ENCODE measurements at regions of chr4 and their contacts with region 1.

Region 1: DNA sequence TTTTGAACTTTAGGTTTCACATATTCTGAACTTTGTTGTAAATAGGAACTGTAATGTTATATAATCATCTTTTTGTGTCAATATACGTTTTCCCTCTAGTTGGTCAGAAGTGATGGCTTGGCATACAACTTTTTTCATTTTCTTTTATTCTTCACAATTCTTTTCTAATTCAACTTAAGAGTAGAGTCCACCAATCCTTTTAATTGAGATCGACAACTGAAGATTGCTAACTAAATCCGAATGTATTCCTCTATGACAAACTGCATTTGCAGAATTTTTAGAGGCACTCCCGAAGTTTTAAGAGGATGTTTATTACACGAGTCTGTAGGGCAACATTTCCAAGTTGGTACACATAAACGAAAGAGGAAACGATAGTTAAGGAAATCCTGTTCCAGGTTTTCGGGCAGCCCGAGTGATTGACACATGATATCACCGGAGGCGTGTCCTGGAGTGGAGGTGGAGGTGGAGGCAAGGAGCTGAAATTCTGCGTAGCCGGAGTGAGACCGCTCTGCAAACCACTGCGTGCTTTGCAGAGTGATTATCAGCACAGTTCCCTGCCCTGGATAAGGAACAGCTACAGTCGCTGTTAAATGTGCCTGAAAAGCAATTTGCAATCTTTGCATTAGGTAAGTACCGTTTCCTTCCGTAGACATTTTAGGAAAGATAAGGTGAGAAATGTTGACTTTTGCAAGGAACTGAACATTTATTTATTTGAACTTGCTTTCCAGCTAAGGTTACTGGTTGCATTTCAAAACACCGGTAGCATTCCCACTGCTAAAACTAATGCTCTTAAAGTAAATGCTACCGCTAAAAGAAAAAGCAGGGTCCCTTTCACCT is at the start of gene SPRY1:
- DNase-seq: peak; percentile 74
- ATAC-seq: peak; percentile 51
- H3K4me3 Mint-ChIP-seq: peak within 1 kb of the TSS; percentile 97
- H3K27ac Mint-ChIP-seq: peak within 1 kb of the TSS; percentile 94
- H3K4me1 Mint-ChIP-seq: peaks cover 16% of the 10 kb centered on the region
- H3K27me3 Mint-ChIP-seq: no peaks in the 10 kb centered on the region
- total RNA-seq, gene SPRY1: 46.3 to 51.3 TPM

Region 2: GRCh38 chr4:123380728-123381716 is 15.5 kb before region 1 on chr4:
- POLR2A ChIA-PET with region 1: no interaction called
- DNase-seq: no peak
- ATAC-seq: no peak
- H3K4me3 Mint-ChIP-seq: no peak overlapping the region
- H3K27ac Mint-ChIP-seq: no peak overlapping the region
- H3K4me1 Mint-ChIP-seq: peaks cover 3% of the 10 kb centered on the region
- H3K27me3 Mint-ChIP-seq: peaks cover 13% of the 10 kb centered on the region

Region 3: DNA sequence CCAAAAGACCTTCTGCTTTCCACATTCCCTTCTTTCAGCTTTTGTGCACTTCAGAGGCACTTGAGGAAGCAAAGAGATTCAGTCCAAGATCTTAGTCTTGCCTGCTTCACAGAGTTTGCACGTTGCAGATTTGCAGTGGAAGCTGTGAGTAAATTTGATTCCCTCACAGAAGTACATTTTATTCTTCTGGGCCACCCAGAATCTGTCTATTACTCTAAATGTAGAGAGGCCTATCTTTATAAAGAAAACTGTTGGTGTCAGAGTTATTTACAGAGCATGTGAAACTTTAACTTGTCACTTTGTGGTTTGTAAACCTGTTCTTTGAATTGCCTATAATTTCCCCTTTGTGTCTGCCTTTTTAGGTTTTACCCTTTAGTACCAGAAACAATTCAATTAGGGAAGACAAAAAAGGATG is 15.6 kb after region 1 on chr4:
- POLR2A ChIA-PET with region 1: interaction called, 76 read pairs
- DNase-seq: no peak
- ATAC-seq: peak; percentile 47
- H3K4me3 Mint-ChIP-seq: peak overlapping the region; percentile 79
- H3K27ac Mint-ChIP-seq: peak overlapping the region; percentile 90
- H3K4me1 Mint-ChIP-seq: peaks cover 45% of the 10 kb centered on the region
- H3K27me3 Mint-ChIP-seq: no peaks in the 10 kb centered on the region

Region 4: GRCh38 chr4:123418351-123418931 is 21.9 kb after region 1 on chr4:
- POLR2A ChIA-PET with region 1: interaction called, 76 read pairs
- DNase-seq: no peak
- ATAC-seq: peak; percentile 48
- H3K4me3 Mint-ChIP-seq: peak overlapping the region; percentile 73
- H3K27ac Mint-ChIP-seq: peak overlapping the region; percentile 95
- H3K4me1 Mint-ChIP-seq: peaks cover 74% of the 10 kb centered on the region
- H3K27me3 Mint-ChIP-seq: no peaks in the 10 kb centered on the region

Region 5: GRCh38 chr4:123444290-123444731 is 47.8 kb after region 1 on chr4:
- POLR2A ChIA-PET with region 1: interaction called, 18 read pairs
- DNase-seq: peak; percentile 56
- ATAC-seq: peak; percentile 87
- H3K4me3 Mint-ChIP-seq: peak overlapping the region; percentile 71
- H3K27ac Mint-ChIP-seq: peak overlapping the region; percentile 84
- H3K4me1 Mint-ChIP-seq: peaks cover 29% of the 10 kb centered on the region
- H3K27me3 Mint-ChIP-seq: no peaks in the 10 kb centered on the region

Region 6: DNA sequence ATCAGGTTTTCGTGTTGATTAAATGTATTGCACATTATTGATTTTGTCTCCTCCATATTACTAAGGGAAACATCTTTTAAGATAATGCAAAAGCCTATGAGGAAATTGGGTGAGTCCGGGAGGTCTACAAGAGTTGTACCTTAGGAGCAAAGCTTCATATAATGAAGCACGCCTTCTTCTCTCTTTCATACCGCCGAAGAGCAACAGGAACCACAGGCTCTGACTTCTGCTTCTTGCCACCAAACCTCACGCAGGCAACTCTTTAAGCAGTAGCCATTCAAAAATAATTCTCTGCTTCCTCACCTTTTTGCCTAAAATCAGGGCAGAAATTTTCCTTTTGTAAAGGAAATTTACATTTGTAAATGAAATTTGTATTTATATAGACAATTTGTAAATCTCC is 139.7 kb after region 1 on chr4:
- POLR2A ChIA-PET with region 1: no interaction called
- DNase-seq: no peak
- ATAC-seq: peak; percentile 65
- H3K4me3 Mint-ChIP-seq: peak overlapping the region; percentile 56
- H3K27ac Mint-ChIP-seq: peak overlapping the region; percentile 70
- H3K4me1 Mint-ChIP-seq: peaks cover 21% of the 10 kb centered on the region
- H3K27me3 Mint-ChIP-seq: no peaks in the 10 kb centered on the region

Measured in activated naive CD8-positive, alpha-beta T cell treated with anti-CD3 and anti-CD28 coated beads, Interleukin-2, amount 10 ng/mL, durations not matched to agents 7 days and 5 days (primary cell).